ENCODE measurements at regions of chr7 and their contacts with region 1.

Region 1: GRCh38 chr7:86201767-86202166 is 441.9 kb upstream of the GRM3 start:
- DNase-seq: no peak
- H3K4me3 ChIP-seq: no peak overlapping the region
- H3K27ac ChIP-seq: no peak overlapping the region
- H3K4me1 ChIP-seq: no peaks in the 10 kb centered on the region
- CTCF ChIP-seq: no peak

Region 2: GRCh38 chr7:86190347-86190746 is 11.4 kb before region 1 on chr7:
- CTCF ChIA-PET with region 1: no interaction called
- POLR2A ChIA-PET with region 1: interaction called, 12 read pairs
- intact Hi-C with region 1: no loop called
- DNase-seq: no peak
- H3K4me3 ChIP-seq: no peak overlapping the region
- H3K27ac ChIP-seq: no peak overlapping the region
- H3K4me1 ChIP-seq: no peaks in the 10 kb centered on the region
- CTCF ChIP-seq: no peak